ENCODE measurements at regions of chr20 and their contacts with region 1.

Region 1: DNA sequence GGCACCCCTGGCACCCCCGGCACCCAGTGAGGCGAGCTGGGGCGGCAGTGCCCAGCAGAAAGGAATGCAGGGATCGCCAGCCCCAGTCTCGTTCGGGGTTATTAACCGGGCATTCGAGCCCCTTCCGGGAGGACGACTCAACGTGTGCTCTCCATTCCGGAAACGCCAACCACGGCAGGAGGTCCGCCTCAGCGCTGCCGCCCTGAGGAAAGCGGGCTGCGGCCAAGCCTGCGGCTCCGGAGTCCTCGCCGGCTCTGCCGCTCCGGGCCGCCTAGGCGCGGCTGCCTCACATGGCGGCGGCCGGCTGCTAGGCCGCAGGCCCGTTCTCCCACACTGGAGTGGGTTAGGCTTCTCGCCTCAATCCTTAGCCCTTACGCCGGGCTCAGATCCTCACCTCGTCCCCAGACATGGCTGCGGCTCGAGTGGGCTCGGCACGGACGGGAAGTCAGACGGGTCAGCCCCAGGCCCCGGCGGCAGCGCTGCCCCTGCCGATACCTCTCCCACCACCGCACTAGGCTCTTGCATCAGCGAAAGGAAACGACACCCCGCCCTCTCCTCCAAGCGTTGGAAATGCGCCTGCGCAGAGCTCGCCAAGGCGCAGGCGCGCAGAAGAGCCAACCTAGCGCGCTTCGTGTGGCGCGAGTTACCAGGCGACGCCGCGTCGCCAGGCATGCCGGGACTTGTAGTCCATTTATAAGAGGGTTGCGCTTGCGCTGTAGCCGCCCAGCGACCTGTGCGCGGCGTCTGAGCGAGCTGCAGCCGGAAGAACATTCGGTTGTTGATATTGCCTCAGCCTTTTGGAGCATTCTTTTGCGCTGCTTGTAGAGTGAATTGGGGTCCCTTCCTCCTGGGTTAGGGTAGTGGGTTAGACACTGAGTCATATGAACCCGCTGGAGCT is at the start of gene EIF2S2:
- DNase-seq: peak; percentile 81 to 94 (median 90)
- H3K4me3 ChIP-seq: peak within 1 kb of the TSS; percentile 71 to 100 (median 97)
- H3K27ac ChIP-seq: peak within 1 kb of the TSS; percentile 49 to 98 (median 92)
- H3K27me3 ChIP-seq: no peaks in the 10 kb centered on the region
- CTCF ChIP-seq: peak in 30 of 56 donors; percentile 2 to 53 (median 24)
- total RNA-seq, gene EIF2S2: 20.5 to 39.5 (median 30.6) TPM

Region 2: DNA sequence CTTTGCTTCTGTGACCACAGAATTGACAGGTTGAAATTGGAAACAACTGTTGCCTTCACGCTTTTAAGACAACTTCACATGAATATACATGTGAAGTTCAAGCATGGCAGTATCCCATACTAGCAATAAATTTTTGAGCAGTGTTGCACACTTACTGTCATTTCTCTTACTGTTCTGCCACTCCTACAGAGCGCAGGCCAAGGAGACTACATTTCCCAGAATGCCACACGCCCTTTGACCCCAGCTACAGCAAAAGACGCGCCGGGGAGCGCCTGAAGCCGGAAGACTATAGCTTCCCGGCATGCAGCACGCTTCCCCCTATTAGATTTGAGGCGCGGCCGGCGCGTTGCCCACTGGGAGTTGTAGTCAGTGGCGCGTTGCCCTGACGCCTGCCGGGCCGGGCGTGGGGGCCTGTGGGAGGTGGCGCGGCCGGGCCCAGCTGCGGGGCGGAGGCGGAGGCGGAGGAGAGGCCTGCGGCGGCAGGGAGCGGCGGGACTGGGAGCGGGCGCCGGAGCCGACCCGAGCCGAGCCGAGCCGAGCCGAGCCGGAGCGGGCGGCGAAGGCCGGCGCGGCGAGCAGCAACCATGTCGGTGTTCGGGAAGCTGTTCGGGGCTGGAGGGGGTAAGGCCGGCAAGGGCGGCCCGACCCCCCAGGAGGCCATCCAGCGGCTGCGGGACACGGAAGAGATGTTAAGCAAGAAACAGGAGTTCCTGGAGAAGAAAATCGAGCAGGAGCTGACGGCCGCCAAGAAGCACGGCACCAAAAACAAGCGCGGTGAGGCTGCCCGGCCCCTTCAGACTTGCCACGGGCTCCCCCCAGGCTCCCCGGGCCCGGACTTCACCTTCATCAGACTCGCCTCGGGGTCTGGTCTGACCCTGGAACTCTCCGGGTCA is 300.8 kb before region 1 on chr20 and contains the start of gene CHMP4B:
- intact Hi-C with region 1: loop called (anchors 1 to 2 kb)
- DNase-seq: peak; percentile 98 to 99 (median 99)
- H3K4me3 ChIP-seq: peak within 1 kb of the TSS; percentile 66 to 100 (median 95)
- H3K27ac ChIP-seq: peak within 1 kb of the TSS in 57 of 59 donors; percentile 16 to 92 (median 83)
- H3K27me3 ChIP-seq: no peaks in the 10 kb centered on the region
- CTCF ChIP-seq: peak in 32 of 56 donors; percentile 7 to 57 (median 29)
- total RNA-seq, gene CHMP4B: 68.7 to 154 (median 115) TPM

Region 3: DNA sequence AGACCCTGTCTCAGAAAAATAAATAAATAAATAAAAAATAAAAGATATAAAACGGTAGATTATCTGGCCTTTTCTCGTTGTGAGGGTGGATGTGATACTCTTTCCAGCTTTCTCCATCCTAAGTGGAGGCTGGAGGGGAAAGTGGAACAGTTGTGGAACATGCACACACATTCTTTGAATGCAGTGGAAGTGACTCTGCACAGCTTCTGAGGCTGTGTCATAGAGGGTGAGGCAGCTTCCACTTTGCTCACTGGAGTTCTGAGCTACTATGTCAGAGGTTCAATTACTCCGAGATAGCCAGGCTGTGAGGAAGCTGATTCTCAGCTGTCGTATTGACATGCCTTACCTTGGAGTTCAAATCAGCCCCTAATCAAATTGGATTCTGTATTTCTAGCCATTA is 218.6 kb before region 1 on chr20:
- intact Hi-C with region 1: no loop called
- DNase-seq: no peak
- H3K4me3 ChIP-seq: no peak overlapping the region
- H3K27ac ChIP-seq: no peak overlapping the region
- H3K27me3 ChIP-seq: no peaks in the 10 kb centered on the region
- CTCF ChIP-seq: no peak